ENCODE measurements at regions of chr18 and their contacts with region 1.

Region 1: GRCh38 chr18:13216092-13216582 is 2.4 kb upstream of the LDLRAD4 start:
- DNase-seq: peak; percentile 87
- H3K4me3 ChIP-seq: no peak overlapping the region
- H3K27ac ChIP-seq: no peak overlapping the region
- H3K4me1 ChIP-seq: peaks cover 23% of the 10 kb centered on the region
- H3K27me3 ChIP-seq: no peaks in the 10 kb centered on the region
- CTCF ChIP-seq: peak; percentile 66

Region 2: GRCh38 chr18:13159579-13159978 is 56.6 kb before region 1 on chr18:
- intact Hi-C with region 1: no loop called
- DNase-seq: no peak
- H3K4me3 ChIP-seq: no peak overlapping the region
- H3K27ac ChIP-seq: no peak overlapping the region
- H3K4me1 ChIP-seq: no peaks in the 10 kb centered on the region
- H3K27me3 ChIP-seq: no peaks in the 10 kb centered on the region
- CTCF ChIP-seq: peak; percentile 80

Region 3: GRCh38 chr18:13394801-13395200 is 178.7 kb after region 1 on chr18:
- intact Hi-C with region 1: no loop called
- DNase-seq: no peak
- H3K4me3 ChIP-seq: no peak overlapping the region
- H3K27ac ChIP-seq: no peak overlapping the region
- H3K4me1 ChIP-seq: no peaks in the 10 kb centered on the region
- H3K27me3 ChIP-seq: no peaks in the 10 kb centered on the region
- CTCF ChIP-seq: no peak

Region 4: DNA sequence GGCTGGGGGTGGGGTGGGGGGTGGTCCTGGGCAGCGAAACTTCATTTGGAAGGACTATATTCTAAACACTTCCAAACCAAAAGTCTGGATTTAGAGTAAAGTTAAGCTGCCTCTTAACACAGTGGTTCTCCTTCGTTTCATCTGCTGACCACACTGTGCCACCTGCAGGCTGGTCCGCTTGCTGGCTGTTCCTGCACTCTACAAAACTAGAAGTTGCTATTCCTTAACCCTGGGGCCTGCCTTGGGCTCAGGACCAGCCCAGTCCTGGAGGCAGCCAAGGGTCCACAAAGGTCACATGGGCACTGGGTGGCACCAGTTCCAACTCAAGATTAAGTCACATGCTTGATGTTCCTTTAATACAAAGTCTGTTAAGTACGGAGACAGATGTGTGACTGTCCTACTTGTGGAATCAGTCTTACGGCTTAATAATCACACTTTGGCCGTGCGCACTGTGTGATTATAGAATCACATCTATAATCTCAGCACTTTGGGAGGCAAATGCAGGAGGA is 314.8 kb after region 1 on chr18:
- intact Hi-C with region 1: loop called (anchors 2 kb)
- DNase-seq: peak; percentile 43
- H3K4me3 ChIP-seq: no peak overlapping the region
- H3K27ac ChIP-seq: no peak overlapping the region
- H3K4me1 ChIP-seq: no peaks in the 10 kb centered on the region
- H3K27me3 ChIP-seq: no peaks in the 10 kb centered on the region
- CTCF ChIP-seq: no peak

Measured in colonic mucosa (tissue), 4 donors.